ENCODE measurements at regions of chr2 and their contacts with region 1.

Region 1: GRCh38 chr2:219475697-219476651 is 22.7 kb upstream of the GMPPA start:
- DNase-seq: peak; percentile 72 to 91 (median 88)
- ATAC-seq: peak; percentile 44 to 57
- H3K4me3 ChIP-seq: no peak overlapping the region
- H3K27ac ChIP-seq: no peak overlapping the region
- H3K4me1 ChIP-seq: peaks cover under 1% of the 10 kb centered on the region
- H3K27me3 ChIP-seq: no peaks in the 10 kb centered on the region

Region 2: GRCh38 chr2:219521066-219521880 is 45.3 kb after region 1 on chr2:
- intact Hi-C with region 1: loop called (anchors 5 to 10 kb)
- DNase-seq: peak; percentile 50 to 77 (median 77)
- ATAC-seq: peak; percentile 65 to 79
- H3K4me3 ChIP-seq: no peak overlapping the region
- H3K27ac ChIP-seq: peak overlapping the region; percentile 44
- H3K4me1 ChIP-seq: peaks cover 4% of the 10 kb centered on the region
- H3K27me3 ChIP-seq: no peaks in the 10 kb centered on the region

Measured in right cardiac atrium (tissue), 5 donors.